ENCODE measurements at regions of chr3 and their contacts with region 1.

Region 1: DNA sequence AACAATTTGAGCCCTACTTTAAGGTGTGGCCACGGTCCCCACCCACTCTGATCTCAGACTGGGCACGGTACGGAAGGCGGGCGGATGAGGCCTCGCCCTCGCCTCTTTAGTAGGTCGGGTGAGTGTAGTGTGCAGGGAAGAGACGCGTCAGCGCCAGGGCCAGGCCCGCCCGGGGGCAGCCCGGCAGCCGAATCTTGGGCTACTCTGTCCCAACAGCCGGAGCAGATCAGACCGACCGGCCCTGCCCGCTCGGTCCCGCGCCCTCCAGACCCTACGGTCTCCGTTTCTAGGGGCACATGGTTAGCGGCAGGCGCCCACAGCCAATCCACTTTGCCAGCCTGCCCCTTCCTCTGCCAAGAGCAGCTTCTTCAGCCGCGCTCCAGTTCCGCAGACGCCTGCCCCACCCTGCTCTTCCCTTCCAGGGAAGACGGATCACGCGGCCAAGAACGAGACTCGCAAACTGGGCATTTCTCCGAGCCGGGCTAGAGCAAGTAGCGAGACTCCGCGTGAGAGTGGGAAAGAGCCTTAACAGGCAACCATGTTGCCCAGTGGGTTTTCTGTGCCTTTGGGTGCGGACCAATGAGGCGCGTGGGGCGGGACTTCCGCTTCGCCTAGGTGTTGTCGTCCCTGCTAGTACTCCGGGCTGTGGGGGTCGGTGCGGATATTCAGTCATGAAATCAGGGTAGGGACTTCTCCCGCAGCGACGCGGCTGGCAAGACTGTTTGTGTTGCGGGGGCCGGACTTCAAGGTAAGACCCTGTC is at the start of gene RNF13:
- DNase-seq: peak; percentile 87
- ATAC-seq: peak; percentile 88
- H3K4me3 Mint-ChIP-seq: peak within 1 kb of the TSS; percentile 99
- H3K27ac Mint-ChIP-seq: peak within 1 kb of the TSS; percentile 100
- H3K4me1 Mint-ChIP-seq: peaks cover 53% of the 10 kb centered on the region
- H3K27me3 Mint-ChIP-seq: peaks cover 3% of the 10 kb centered on the region
- CTCF ChIP-seq: no peak
- total RNA-seq, gene RNF13: 57.6 and 59.6 TPM in 2 replicates

Region 2: DNA sequence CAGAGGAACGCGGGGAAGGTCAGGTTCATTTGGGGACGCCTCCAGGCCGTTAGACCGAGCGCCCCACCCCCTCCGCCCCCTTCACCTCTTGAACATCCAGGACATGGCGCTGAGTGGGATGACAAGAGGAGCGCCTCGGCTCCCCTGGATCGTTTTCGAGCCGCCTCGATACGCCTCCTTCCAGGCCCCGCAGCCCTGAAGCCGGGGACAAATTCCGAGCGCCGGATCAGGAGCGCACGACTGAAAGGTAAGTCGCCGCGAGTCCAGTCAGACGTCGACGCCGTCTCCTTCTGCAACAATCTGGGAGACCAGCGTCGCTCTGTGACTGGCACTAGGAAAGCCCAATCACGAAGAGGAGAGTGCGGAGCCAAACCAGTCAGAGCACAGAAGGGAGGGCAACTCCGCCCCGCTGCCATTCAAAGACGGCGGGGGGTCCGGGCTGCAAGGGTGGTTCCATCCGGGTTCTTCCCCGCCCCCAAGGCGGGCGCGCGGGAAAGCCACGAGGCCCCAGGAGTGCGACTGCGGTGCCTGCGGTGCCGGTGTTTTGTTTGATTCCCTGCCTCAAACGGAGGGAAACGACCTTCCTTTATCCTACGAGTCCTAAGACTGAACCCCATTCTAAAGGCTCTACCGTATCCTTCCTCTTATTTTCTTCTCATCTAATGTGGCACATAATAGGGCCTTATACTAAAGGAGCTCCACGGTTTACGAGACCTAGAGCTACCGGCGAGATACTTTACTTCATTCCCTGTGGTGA is 726.4 kb before region 1 on chr3 and contains the start of gene HLTF:
- CTCF ChIA-PET with region 1: no interaction called
- POLR2A ChIA-PET with region 1: no interaction called
- intact Hi-C with region 1: loop called (anchors 5 kb)
- DNase-seq: peak; percentile 80
- ATAC-seq: peak; percentile 99
- H3K4me3 Mint-ChIP-seq: peak within 1 kb of the TSS; percentile 99
- H3K27ac Mint-ChIP-seq: peak within 1 kb of the TSS; percentile 87
- H3K4me1 Mint-ChIP-seq: peaks cover 32% of the 10 kb centered on the region
- H3K27me3 Mint-ChIP-seq: no peaks in the 10 kb centered on the region
- CTCF ChIP-seq: no peak
- total RNA-seq, gene HLTF: 16.4 and 18.3 TPM in 2 replicates

Region 3: GRCh38 chr3:149752051-149752787 is 60.6 kb before region 1 on chr3 and contains the start of gene COMMD2:
- CTCF ChIA-PET with region 1: interaction called, 16 read pairs
- POLR2A ChIA-PET with region 1: interaction called, 23 read pairs
- intact Hi-C with region 1: loop called (anchors 1 kb)
- DNase-seq: peak; percentile 68
- ATAC-seq: peak; percentile 99
- H3K4me3 Mint-ChIP-seq: peak within 1 kb of the TSS; percentile 98
- H3K27ac Mint-ChIP-seq: peak within 1 kb of the TSS; percentile 92
- H3K4me1 Mint-ChIP-seq: peaks cover 30% of the 10 kb centered on the region
- H3K27me3 Mint-ChIP-seq: peaks cover 7% of the 10 kb centered on the region
- CTCF ChIP-seq: no peak
- total RNA-seq, gene COMMD2: 41.5 and 45.6 TPM in 2 replicates

Region 4: GRCh38 chr3:149777414-149778214 is 35.2 kb before region 1 on chr3:
- CTCF ChIA-PET with region 1: interaction called, 20 read pairs
- POLR2A ChIA-PET with region 1: no interaction called
- intact Hi-C with region 1: loop called (anchors 5 kb)
- DNase-seq: no peak
- ATAC-seq: no peak
- H3K4me3 Mint-ChIP-seq: no peak overlapping the region
- H3K27ac Mint-ChIP-seq: no peak overlapping the region
- H3K4me1 Mint-ChIP-seq: peaks cover 24% of the 10 kb centered on the region
- H3K27me3 Mint-ChIP-seq: no peaks in the 10 kb centered on the region
- CTCF ChIP-seq: no peak

Region 5: DNA sequence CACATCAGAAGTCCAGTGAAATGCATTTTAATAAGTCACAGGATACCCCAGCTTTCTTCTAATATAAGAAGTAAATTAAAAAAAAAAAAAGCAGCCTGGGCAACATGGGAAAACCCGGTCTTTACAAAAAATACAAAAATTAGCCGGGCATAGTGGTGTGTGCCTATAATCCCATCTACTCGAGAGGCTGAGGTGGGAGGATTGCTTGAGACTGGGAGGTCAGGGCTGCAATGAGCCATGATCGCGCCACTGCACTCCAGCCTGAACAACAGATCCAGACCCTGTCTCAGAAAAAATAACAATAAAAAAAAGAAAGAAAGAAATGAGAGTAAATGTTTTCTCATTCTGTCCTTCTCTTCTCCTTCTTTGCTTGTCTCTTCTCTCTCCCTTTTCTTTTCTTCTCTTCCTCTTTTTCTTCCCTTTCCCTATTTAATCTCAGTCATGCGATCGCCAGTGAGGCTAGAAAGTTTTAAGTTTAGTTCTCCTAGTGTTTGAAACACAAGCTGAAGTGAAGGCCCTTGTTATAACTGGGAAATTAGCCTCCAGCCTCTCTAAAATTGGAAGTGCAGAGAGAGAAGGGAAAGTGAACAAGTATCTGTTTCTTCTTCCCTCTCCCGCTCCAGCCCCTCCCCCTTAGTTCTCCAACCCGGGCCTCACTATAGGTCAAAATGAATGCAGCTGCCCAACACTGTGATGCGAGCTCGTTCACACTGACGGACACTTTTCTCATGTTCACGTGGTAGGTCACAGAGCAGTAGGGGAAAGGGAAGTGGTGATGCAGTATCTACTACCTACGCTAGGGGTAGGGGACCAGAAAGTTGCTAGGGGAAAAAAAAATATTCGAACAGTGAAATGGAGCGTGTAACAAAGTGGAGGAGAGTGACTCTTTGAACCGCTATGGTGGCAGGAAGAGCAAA is 571.8 kb after region 1 on chr3:
- CTCF ChIA-PET with region 1: no interaction called
- POLR2A ChIA-PET with region 1: no interaction called
- intact Hi-C with region 1: loop called (anchors 2 kb)
- DNase-seq: peak; percentile 47
- ATAC-seq: peak; percentile 95
- H3K4me3 Mint-ChIP-seq: peak overlapping the region; percentile 84
- H3K27ac Mint-ChIP-seq: peak overlapping the region; percentile 98
- H3K4me1 Mint-ChIP-seq: peaks cover 42% of the 10 kb centered on the region
- H3K27me3 Mint-ChIP-seq: no peaks in the 10 kb centered on the region
- CTCF ChIP-seq: no peak

Region 6: DNA sequence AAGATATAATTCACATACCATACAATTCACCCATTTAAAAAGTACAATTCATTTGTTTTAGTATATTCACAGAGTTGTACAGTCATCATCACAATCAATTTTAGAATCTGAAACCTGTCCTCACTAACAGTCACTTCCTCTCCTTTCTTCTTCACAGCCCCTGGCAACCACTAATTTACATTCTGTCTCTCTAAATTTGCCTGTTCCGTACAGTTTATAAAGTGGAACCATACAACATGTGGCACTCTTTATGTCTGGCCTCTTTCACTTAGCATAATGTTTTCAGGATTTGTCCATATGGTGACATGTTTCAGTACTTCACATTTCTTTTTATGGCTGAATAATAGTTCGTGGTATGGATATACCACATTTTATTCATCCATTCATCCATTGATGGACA is 868.3 kb after region 1 on chr3:
- CTCF ChIA-PET with region 1: no interaction called
- POLR2A ChIA-PET with region 1: no interaction called
- intact Hi-C with region 1: no loop called
- DNase-seq: no peak
- ATAC-seq: peak; percentile 95
- H3K4me3 Mint-ChIP-seq: peak overlapping the region; percentile 80
- H3K27ac Mint-ChIP-seq: peak overlapping the region; percentile 66
- H3K4me1 Mint-ChIP-seq: peaks cover 29% of the 10 kb centered on the region
- H3K27me3 Mint-ChIP-seq: no peaks in the 10 kb centered on the region
- CTCF ChIP-seq: no peak

Region 7: GRCh38 chr3:150703299-150704134 is 890.7 kb after region 1 on chr3 and contains the start of gene ERICH6:
- CTCF ChIA-PET with region 1: no interaction called
- POLR2A ChIA-PET with region 1: no interaction called
- intact Hi-C with region 1: loop called (anchors 5 kb)
- DNase-seq: peak; percentile 86
- ATAC-seq: peak; percentile 93
- H3K4me3 Mint-ChIP-seq: peak within 1 kb of the TSS; percentile 97
- H3K27ac Mint-ChIP-seq: peak within 1 kb of the TSS; percentile 98
- H3K4me1 Mint-ChIP-seq: peaks cover 19% of the 10 kb centered on the region
- H3K27me3 Mint-ChIP-seq: no peaks in the 10 kb centered on the region
- CTCF ChIP-seq: no peak
- total RNA-seq, gene ERICH6: not detected in 2 replicates